ENCODE measurements at regions of chr6 and their contacts with region 1.

Region 1: DNA sequence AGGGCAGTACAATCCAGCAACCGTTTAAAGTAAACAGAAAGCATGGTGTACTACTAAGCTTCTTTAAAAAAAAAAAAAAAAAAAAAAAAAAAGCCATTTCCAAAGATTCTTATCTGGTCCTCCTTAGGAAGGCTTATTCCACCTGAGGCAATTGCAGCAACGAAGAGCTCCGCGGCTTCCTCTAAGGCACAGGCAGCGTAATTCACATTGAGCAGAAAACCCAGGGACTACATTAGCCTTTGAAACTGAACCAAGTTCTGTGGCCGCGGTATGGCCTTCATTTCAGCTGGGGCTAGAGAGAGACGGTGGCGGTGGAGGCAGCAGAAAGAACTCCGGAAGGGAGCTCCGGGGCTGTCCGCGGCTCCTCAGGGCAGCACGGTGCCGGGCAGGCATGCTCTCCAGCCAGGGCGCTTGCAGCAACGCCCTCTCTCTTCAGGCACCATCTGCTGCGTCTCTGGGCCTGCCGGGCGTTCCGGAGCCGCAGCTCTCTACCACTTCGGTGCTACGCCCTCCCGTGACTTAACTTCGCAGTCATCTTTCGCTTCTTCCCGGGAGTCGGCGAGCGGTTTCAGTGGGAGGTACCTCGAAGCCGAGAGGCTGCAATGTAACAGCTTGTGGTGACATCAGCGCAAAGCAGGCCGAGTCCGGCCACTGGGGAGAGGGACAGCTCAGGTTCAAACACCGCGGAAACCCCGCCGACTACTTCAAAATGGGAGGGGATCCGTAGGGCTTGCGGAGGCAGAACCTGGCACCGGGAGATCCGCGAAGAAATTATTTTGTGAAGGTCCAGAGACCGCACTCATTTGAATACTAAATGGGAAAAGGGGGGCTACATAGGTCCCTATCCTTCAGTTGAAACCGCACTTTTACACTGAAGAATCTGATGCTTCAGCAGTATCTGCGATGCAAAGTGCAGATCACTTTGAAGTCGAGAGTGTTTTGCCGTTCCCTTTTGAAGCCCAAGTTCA is 100.0 kb downstream of the DST start:
- DNase-seq: peak; percentile 92
- ATAC-seq: peak; percentile 99
- H3K4me3 ChIP-seq: peak overlapping the region; percentile 57 to 78
- H3K27ac ChIP-seq: peak overlapping the region; percentile 96
- H3K4me1 ChIP-seq: peaks cover 37% of the 10 kb centered on the region
- H3K27me3 ChIP-seq: no peaks in the 10 kb centered on the region
- CTCF ChIP-seq: peak; percentile 29

Region 2: GRCh38 chr6:56475736-56476457 is 66.8 kb before region 1 on chr6:
- CTCF ChIA-PET with region 1: no interaction called
- POLR2A ChIA-PET with region 1: no interaction called
- in situ Hi-C with region 1: no loop called
- intact Hi-C with region 1: no loop called
- DNase-seq: no peak
- ATAC-seq: no peak
- H3K4me3 ChIP-seq: no peak overlapping the region
- H3K27ac ChIP-seq: no peak overlapping the region
- H3K4me1 ChIP-seq: no peaks in the 10 kb centered on the region
- H3K27me3 ChIP-seq: no peaks in the 10 kb centered on the region
- CTCF ChIP-seq: no peak

Region 3: GRCh38 chr6:56499095-56499494 is 43.6 kb before region 1 on chr6:
- CTCF ChIA-PET with region 1: interaction called, 10 read pairs
- POLR2A ChIA-PET with region 1: no interaction called
- in situ Hi-C with region 1: no loop called
- intact Hi-C with region 1: no loop called
- DNase-seq: no peak
- ATAC-seq: no peak
- H3K4me3 ChIP-seq: no peak overlapping the region
- H3K27ac ChIP-seq: no peak overlapping the region
- H3K4me1 ChIP-seq: no peaks in the 10 kb centered on the region
- H3K27me3 ChIP-seq: no peaks in the 10 kb centered on the region
- CTCF ChIP-seq: no peak

Region 4: GRCh38 chr6:56821005-56821432 is 278.4 kb after region 1 on chr6:
- CTCF ChIA-PET with region 1: no interaction called
- POLR2A ChIA-PET with region 1: interaction called, 12 read pairs
- in situ Hi-C with region 1: no loop called
- intact Hi-C with region 1: no loop called
- DNase-seq: no peak
- ATAC-seq: peak; percentile 60
- H3K4me3 ChIP-seq: no peak overlapping the region
- H3K27ac ChIP-seq: peak overlapping the region; percentile 41
- H3K4me1 ChIP-seq: peaks cover 31% of the 10 kb centered on the region
- H3K27me3 ChIP-seq: no peaks in the 10 kb centered on the region
- CTCF ChIP-seq: no peak

Region 5: GRCh38 chr6:56862415-56863175 is 319.9 kb after region 1 on chr6:
- CTCF ChIA-PET with region 1: no interaction called
- POLR2A ChIA-PET with region 1: no interaction called
- in situ Hi-C with region 1: no loop called
- intact Hi-C with region 1: no loop called
- DNase-seq: no peak
- ATAC-seq: peak; percentile 70
- H3K4me3 ChIP-seq: peak overlapping the region in 1 of 2 experiments; percentile 19; a peak in 2 of 4 replicates
- H3K27ac ChIP-seq: peak overlapping the region; percentile 85
- H3K4me1 ChIP-seq: peaks cover 55% of the 10 kb centered on the region
- H3K27me3 ChIP-seq: no peaks in the 10 kb centered on the region
- CTCF ChIP-seq: no peak

Measured in Panc1 (cell line).